ENCODE measurements at regions of chr4 and their contacts with region 1.

Region 1: GRCh38 chr4:139501927-139502899 is 48.3 kb downstream of the RAB33B start:
- DNase-seq: no peak
- H3K4me3 ChIP-seq: no peak overlapping the region
- H3K27ac ChIP-seq: no peak overlapping the region
- H3K4me1 ChIP-seq: no peaks in the 10 kb centered on the region; a peak in 1 of 4 replicates
- H3K27me3 ChIP-seq: no peaks in the 10 kb centered on the region
- CTCF ChIP-seq: no peak
- EP300 ChIP-seq: no peak
- RAD21 ChIP-seq: no peak

Region 2: GRCh38 chr4:139484783-139485318 is 17.4 kb before region 1 on chr4:
- CTCF ChIA-PET with region 1: interaction called, 15 read pairs
- POLR2A ChIA-PET with region 1: no interaction called
- DNase-seq: no peak
- H3K4me3 ChIP-seq: no peak overlapping the region
- H3K27ac ChIP-seq: no peak overlapping the region
- H3K4me1 ChIP-seq: no peaks in the 10 kb centered on the region
- H3K27me3 ChIP-seq: no peaks in the 10 kb centered on the region
- CTCF ChIP-seq: no peak
- EP300 ChIP-seq: no peak
- RAD21 ChIP-seq: no peak

Region 3: DNA sequence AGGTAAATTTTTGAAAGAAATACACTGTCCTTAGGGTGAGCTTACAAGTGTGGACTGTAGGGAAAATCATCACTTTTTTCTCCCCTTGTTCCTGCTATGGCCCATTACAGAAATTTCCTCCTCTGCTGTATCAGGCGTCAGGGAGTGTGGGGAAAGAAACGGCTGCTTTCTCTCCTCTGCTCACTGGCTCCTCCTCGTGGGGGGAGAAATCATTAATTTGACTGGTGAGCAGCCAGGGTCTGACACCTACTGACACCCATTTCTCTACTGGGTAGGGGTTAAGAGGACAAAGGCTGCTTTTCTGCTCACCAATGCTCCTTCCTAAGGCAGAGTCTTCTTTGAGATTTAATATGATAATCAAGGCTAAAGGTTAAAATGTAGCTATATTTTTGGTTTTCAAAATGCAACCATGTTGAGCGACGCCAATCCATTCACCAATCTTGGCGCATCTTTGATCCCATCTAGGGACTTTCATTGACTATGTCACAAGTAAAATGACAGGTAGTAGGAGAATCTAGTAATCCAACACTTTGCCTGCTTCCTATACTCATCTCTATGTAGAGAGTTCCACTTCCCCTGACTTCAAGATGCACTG is 28.7 kb after region 1 on chr4:
- CTCF ChIA-PET with region 1: interaction called, 17 read pairs
- POLR2A ChIA-PET with region 1: no interaction called
- DNase-seq: peak; percentile 68
- H3K4me3 ChIP-seq: no peak overlapping the region; a peak in 1 of 4 replicates
- H3K27ac ChIP-seq: no peak overlapping the region
- H3K4me1 ChIP-seq: peaks cover 0 to 3% of the 10 kb centered on the region in 2 experiments; a peak in 1 of 4 replicates
- H3K27me3 ChIP-seq: no peaks in the 10 kb centered on the region
- CTCF ChIP-seq: peak; percentile 62
- EP300 ChIP-seq: no peak
- RAD21 ChIP-seq: peak; percentile 64

Region 4: GRCh38 chr4:139554893-139555704 is 52.9 kb after region 1 on chr4:
- CTCF ChIA-PET with region 1: interaction called, 13 read pairs
- POLR2A ChIA-PET with region 1: no interaction called
- DNase-seq: peak; percentile 86
- H3K4me3 ChIP-seq: peak overlapping the region; percentile 63 to 97
- H3K27ac ChIP-seq: peak overlapping the region; percentile 61 to 89
- H3K4me1 ChIP-seq: peaks cover 27 to 35% of the 10 kb centered on the region in 2 experiments; a peak in 3 of 4 replicates
- H3K27me3 ChIP-seq: no peaks in the 10 kb centered on the region; the same call in 1 of the 2 replicates
- CTCF ChIP-seq: no peak
- EP300 ChIP-seq: no peak
- RAD21 ChIP-seq: 0 out of 2 replicates have a peak, but pooled peaks have one; percentile 10

Region 5: DNA sequence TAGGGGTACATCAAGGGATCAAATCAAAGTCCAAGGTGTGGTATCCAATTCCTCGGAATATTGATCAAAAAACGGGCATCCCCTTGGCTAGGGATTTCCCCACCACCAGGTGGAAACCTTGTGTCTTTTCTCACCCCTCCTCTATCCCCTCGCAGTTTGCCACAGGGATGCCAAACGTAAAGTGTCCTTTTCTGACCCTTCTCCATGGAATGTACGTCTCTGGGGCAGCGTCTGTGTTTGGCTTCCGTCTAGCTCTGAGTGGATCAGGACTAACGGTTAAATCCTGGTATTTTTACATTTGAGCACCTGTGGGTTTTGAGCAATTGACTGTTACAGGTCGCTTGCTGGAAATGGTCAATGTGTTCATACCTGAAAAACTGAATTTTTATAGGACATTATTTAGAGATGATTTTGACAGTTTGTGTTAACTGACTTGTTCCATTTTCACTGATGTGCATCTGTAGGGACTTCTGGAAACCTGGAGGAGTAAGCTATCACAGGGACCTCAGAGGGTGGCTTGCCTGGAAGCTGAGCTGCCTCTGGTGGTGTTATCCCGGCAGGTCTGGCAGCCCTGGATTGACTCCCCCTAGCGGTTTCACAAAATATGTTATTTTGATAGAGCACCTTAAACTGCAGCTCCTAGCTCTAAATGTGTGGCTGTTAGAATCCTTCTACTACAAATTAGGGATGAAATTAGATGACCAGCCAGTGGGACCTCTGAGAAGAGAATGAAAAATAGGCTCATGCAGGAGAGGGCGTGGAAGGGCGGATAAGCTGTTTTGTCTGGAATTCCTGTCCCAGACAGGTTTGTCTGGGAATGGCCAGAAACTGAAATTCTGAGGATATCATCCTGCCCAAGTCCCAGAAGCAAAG is 154.6 kb after region 1 on chr4:
- CTCF ChIA-PET with region 1: interaction called, 19 read pairs
- POLR2A ChIA-PET with region 1: no interaction called
- DNase-seq: peak; percentile 74
- H3K4me3 ChIP-seq: peak overlapping the region in 1 of 2 experiments; percentile 26; a peak in 2 of 4 replicates
- H3K27ac ChIP-seq: no peak overlapping the region
- H3K4me1 ChIP-seq: peaks cover 6 to 11% of the 10 kb centered on the region in 2 experiments; a peak in 2 of 4 replicates
- H3K27me3 ChIP-seq: no peaks in the 10 kb centered on the region
- CTCF ChIP-seq: peak; percentile 88
- EP300 ChIP-seq: no peak
- RAD21 ChIP-seq: peak; percentile 59

Region 6: DNA sequence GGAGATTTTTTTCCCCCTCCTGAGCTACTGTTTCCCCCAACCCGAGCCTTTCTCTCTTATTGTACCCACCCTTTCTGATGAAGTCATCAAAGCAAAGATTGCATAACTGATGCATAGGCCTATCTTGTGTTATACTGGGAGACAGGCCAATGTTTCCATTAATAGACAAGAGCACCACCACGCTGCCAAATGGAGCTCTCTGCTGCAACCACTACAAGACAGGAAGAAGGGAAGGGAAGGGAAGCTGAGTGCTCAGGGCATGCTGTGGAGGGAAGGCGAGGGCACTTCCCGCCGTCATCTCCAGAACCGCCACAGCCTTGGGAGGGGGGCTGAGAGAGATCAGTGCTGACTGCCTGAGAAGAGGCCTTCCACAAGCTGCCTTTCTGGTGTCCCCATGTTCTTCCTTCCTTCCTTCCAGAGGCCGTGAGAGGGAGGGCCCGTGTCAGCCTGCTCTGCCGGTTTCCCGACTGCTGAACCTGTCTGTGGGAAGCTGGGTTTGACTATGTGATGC is 238.4 kb after region 1 on chr4:
- CTCF ChIA-PET with region 1: no interaction called
- POLR2A ChIA-PET with region 1: no interaction called
- DNase-seq: peak; percentile 72
- H3K4me3 ChIP-seq: no peak overlapping the region
- H3K27ac ChIP-seq: peak overlapping the region; percentile 55 to 90
- H3K4me1 ChIP-seq: peaks cover 12 to 45% of the 10 kb centered on the region in 2 experiments
- H3K27me3 ChIP-seq: no peaks in the 10 kb centered on the region
- CTCF ChIP-seq: peak; percentile 41
- EP300 ChIP-seq: 0 out of 4 replicates have a peak, but pooled peaks of 1 of the 2 experiments have one; percentile 15
- RAD21 ChIP-seq: peak; percentile 49